Common myeloid progenitor, CD34-positive (primary cell): ENCODE measurements at regions of chr20 and their contacts with region 1.

Region 1: DNA sequence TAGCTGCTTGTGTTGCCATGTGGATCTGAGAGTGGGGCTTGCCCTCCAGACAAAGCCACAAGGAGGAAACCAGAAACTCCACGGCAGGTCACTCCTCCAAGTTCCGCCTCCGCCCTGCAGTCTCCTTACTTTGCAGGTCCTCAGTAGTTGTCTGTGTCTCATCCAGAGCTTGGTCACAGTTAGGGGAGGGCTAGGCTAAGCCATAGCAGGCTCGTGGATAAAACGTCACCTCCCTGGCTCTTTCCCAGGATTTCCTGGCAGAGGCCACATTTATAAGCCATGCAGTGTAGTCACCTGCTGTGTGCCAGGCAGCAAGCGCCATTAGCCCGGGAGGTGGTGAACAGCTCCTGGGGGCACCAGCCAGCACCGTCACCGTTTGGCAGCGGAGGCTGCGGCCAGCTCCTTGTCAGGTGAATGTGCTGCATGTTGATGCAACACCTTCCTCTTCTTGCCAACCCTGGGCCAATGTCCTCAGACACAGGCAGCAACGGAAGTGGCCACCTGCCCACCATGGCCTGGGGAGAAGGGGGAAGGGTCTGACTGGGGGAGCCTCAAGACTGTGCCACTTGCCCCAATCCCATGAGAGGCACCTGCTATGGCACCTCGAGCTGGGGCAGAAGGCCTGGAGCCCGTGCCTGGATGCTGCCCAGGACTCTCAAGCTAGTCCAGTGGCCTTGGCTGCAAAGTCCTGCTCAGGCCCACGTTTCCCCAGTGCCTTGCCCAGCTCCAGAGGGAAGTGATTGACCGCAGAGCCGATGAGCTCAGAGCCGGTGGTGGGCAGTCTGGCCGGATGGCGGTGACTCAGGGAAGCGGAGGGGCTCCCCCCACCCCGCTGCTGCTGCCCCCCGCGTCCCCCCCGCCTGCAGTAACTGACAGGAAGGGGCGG is 39.0 kb upstream of the SLCO4A1 start:
- DNase-seq: peak; percentile 79 to 96 (median 94)
- H3K4me3 ChIP-seq: peak overlapping the region; percentile 4 to 72 (median 42)
- H3K27ac ChIP-seq: peak overlapping the region in 1 of 2 experiments; percentile 71
- H3K4me1 ChIP-seq: peaks cover 4 to 77% (median 66%) of the 10 kb centered on the region in 4 experiments
- H3K27me3 ChIP-seq: no peaks in the 10 kb centered on the region

Region 2: DNA sequence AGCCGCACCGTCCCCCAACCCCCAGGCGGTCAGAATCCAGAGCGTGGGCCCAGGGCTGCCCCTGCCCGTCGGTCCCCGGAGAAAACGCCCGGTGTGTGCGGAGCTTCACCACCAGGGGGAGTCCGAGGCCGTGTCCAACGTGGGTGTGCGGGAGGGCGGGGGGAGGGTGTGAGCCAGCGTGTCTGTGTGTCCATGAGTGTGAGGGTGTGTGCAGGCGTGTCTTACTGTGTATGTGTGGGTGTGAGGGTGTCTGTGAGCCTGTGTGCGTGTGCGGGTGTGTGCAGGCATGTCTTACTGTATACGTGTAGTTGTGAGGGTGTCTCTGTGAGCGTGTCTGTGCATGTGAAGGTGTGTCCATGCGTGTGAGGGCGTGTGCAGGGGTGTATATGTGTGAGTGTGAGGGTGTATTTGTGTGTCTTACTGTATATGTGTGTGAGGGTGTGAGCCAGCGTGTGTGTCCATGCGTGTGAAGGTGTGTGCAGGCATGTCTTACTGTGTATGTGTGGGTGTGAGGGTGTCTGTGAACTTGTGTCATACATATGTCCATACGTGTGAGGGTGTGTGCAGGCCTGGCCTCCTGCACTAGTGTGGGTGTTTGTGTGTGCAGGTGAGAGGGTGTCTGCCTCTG is 102.9 kb before region 1 on chr20:
- CTCF ChIA-PET with region 1: interaction called, 13 read pairs
- POLR2A ChIA-PET with region 1: no interaction called
- DNase-seq: peak; percentile 67 to 80 (median 77)
- H3K4me3 ChIP-seq: no peak overlapping the region
- H3K27ac ChIP-seq: no peak overlapping the region
- H3K4me1 ChIP-seq: peaks cover 0 to 33% (median 21%) of the 10 kb centered on the region in 4 experiments
- H3K27me3 ChIP-seq: peaks cover 0 to 5% (median 0%) of the 10 kb centered on the region in 5 experiments

Region 3: DNA sequence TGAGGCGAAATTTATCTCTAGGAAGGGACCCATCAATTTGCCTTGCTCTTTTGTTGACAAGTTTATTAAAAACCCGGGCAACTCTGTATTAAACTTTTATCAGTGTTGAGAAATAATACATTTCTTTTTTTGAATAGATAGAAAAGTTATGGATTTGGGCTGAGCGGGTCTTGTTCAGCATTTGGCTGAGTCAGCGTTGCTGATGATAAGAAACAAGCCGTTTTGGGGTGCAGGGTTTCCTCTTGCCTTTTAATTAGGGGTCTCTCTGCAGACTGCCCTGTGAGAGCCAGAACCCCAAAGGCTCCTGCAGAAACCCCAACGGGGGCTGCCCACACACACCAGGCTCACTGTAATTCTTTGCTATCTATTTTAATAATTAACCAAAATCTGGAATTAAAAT is 43.1 kb before region 1 on chr20:
- CTCF ChIA-PET with region 1: no interaction called
- POLR2A ChIA-PET with region 1: no interaction called
- DNase-seq: no peak
- H3K4me3 ChIP-seq: no peak overlapping the region
- H3K27ac ChIP-seq: no peak overlapping the region
- H3K4me1 ChIP-seq: peaks cover 7 to 49% (median 35%) of the 10 kb centered on the region in 4 experiments
- H3K27me3 ChIP-seq: no peaks in the 10 kb centered on the region

Region 4: DNA sequence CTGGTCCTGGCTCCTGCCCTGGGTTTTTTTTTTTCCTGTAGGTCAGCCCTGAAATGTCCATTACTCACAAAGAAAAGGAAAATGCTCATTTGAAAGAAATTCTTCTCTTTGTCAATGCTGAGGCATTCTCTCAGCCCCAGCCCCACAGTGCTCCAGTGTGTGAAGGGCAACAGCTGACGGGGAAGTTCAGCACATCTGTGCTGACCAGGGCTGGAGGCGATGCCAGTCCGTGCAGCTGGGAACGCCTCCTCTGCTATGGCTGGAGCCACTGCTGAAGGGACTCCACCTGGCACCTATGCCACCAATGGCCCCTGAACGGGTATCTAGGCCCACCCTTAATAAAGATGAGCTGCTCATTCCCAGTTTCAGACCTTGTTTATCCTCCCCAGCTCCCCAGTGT is 32.9 kb before region 1 on chr20:
- CTCF ChIA-PET with region 1: no interaction called
- POLR2A ChIA-PET with region 1: no interaction called
- DNase-seq: no peak
- H3K4me3 ChIP-seq: no peak overlapping the region
- H3K27ac ChIP-seq: no peak overlapping the region
- H3K4me1 ChIP-seq: peaks cover 0 to 20% (median 3%) of the 10 kb centered on the region in 4 experiments
- H3K27me3 ChIP-seq: peaks cover 0 to 26% (median 6%) of the 10 kb centered on the region in 5 experiments

Region 5: GRCh38 chr20:62623488-62624324 is 20.4 kb after region 1 on chr20:
- CTCF ChIA-PET with region 1: interaction called, 29 read pairs
- POLR2A ChIA-PET with region 1: interaction called, 30 read pairs
- DNase-seq: peak; percentile 83 to 90 (median 87)
- H3K4me3 ChIP-seq: peak overlapping the region in 4 of 7 experiments; percentile 48 to 57 (median 49)
- H3K27ac ChIP-seq: peak overlapping the region; percentile 74 to 86
- H3K4me1 ChIP-seq: peaks cover 0 to 77% (median 71%) of the 10 kb centered on the region in 4 experiments
- H3K27me3 ChIP-seq: no peaks in the 10 kb centered on the region

Region 6: GRCh38 chr20:62642040-62642665 is 38.9 kb after region 1 on chr20 and contains the start of gene SLCO4A1:
- CTCF ChIA-PET with region 1: no interaction called
- POLR2A ChIA-PET with region 1: interaction called, 16 read pairs
- DNase-seq: peak; percentile 72 to 88 (median 84)
- H3K4me3 ChIP-seq: peak within 1 kb of the TSS; percentile 54 to 82 (median 67)
- H3K27ac ChIP-seq: peak within 1 kb of the TSS in 1 of 2 experiments; percentile 51
- H3K4me1 ChIP-seq: peaks cover 0 to 63% (median 58%) of the 10 kb centered on the region in 4 experiments
- H3K27me3 ChIP-seq: no peaks in the 10 kb centered on the region

Region 7: GRCh38 chr20:62652051-62652926 is 49.0 kb after region 1 on chr20:
- CTCF ChIA-PET with region 1: interaction called, 3 read pairs
- POLR2A ChIA-PET with region 1: interaction called, 13 read pairs
- DNase-seq: peak; percentile 52 to 72 (median 70)
- H3K4me3 ChIP-seq: peak overlapping the region in 5 of 7 experiments; percentile 12 to 64 (median 29)
- H3K27ac ChIP-seq: peak overlapping the region in 1 of 2 experiments; percentile 66
- H3K4me1 ChIP-seq: peaks cover 3 to 62% (median 32%) of the 10 kb centered on the region in 4 experiments
- H3K27me3 ChIP-seq: no peaks in the 10 kb centered on the region

Region 8: GRCh38 chr20:63330940-63331339 is 727.7 kb after region 1 on chr20:
- CTCF ChIA-PET with region 1: no interaction called
- POLR2A ChIA-PET with region 1: no interaction called
- DNase-seq: no peak
- H3K4me3 ChIP-seq: no peak overlapping the region
- H3K27ac ChIP-seq: no peak overlapping the region
- H3K4me1 ChIP-seq: no peaks in the 10 kb centered on the region
- H3K27me3 ChIP-seq: peaks cover 0 to 26% (median 4%) of the 10 kb centered on the region in 5 experiments